ENCODE measurements at regions of chr10 and their contacts with region 1.

Region 1: GRCh38 chr10:28977518-28977917 is 300.2 kb downstream of the BAMBI start:
- DNase-seq: no peak

Region 2: GRCh38 chr10:28954211-28954610 is 23.3 kb before region 1 on chr10:
- intact Hi-C with region 1: loop called (anchors 1 to 5 kb)
- DNase-seq: no peak

Region 3: GRCh38 chr10:29081951-29082699 is 104.6 kb after region 1 on chr10:
- intact Hi-C with region 1: no loop called
- DNase-seq: no peak

Measured in posterior vena cava (tissue), 2 donors.